ENCODE measurements at regions of chr3 and their contacts with region 1.

Region 1: GRCh38 chr3:36784012-36784662 is 19.8 kb upstream of the DCLK3 start:
- DNase-seq: no peak
- ATAC-seq: no peak

Region 2: GRCh38 chr3:36738702-36739101 is 45.4 kb before region 1 on chr3:
- intact Hi-C with region 1: loop called (anchors 5 kb)
- DNase-seq: peak; percentile 80
- ATAC-seq: peak; percentile 57

Measured in Right ventricle myocardium inferior (tissue), 1 donor.